Naive thymus-derived CD8-positive, alpha-beta T cell (primary cell): ENCODE measurements at regions of chr1 and their contacts with region 1.

Region 1: GRCh38 chr1:101253976-101254674 is 17.3 kb downstream of the S1PR1 start:
- DNase-seq: no peak
- ATAC-seq: peak in 1 of 2 donors; percentile 41
- H3K4me3 Mint-ChIP-seq: no peak overlapping the region
- H3K27ac Mint-ChIP-seq: peak overlapping the region in 1 of 10 donors; percentile 81
- H3K4me1 Mint-ChIP-seq: peaks cover 38 to 62% (median 60%) of the 10 kb centered on the region in 4 donors
- H3K27me3 Mint-ChIP-seq: no peaks in the 10 kb centered on the region

Region 2: GRCh38 chr1:101268893-101269292 is 14.8 kb after region 1 on chr1:
- POLR2A ChIA-PET with region 1: interaction called, 31 read pairs
- DNase-seq: peak in 1 of 10 donors; percentile 51
- ATAC-seq: peak; percentile 46 to 57
- H3K4me3 Mint-ChIP-seq: peak overlapping the region in 2 of 10 donors; percentile 34 to 37
- H3K27ac Mint-ChIP-seq: peak overlapping the region in 7 of 10 donors; percentile 21 to 81 (median 45)
- H3K4me1 Mint-ChIP-seq: peaks cover 23 to 51% (median 50%) of the 10 kb centered on the region in 4 donors
- H3K27me3 Mint-ChIP-seq: no peaks in the 10 kb centered on the region